ENCODE measurements at regions of chr21 and their contacts with region 1.

Region 1: DNA sequence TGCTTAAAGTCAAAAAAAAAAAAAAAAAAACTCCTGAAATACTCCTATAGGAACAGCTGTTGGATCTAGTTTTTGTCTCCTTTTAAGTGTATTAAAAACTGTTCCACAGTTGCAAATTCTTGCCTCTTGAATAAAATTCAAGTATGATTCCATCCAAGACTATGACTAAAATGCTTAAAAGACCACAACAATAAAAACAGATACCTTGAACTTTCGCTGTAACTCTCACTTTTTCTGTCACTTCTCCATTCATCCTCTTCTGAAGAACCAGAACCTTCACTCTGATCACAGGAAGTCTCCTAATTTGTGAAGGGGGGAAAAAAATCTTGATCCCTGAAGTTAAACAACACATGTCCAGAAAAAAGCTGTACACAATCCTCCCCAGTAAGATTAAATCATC is 55.0 kb upstream of the PSMG1 start:
- DNase-seq: no peak
- H3K4me3 Mint-ChIP-seq: no peak overlapping the region
- H3K27ac Mint-ChIP-seq: no peak overlapping the region
- H3K4me1 Mint-ChIP-seq: peaks cover 5% of the 10 kb centered on the region
- H3K27me3 Mint-ChIP-seq: no peaks in the 10 kb centered on the region

Region 2: DNA sequence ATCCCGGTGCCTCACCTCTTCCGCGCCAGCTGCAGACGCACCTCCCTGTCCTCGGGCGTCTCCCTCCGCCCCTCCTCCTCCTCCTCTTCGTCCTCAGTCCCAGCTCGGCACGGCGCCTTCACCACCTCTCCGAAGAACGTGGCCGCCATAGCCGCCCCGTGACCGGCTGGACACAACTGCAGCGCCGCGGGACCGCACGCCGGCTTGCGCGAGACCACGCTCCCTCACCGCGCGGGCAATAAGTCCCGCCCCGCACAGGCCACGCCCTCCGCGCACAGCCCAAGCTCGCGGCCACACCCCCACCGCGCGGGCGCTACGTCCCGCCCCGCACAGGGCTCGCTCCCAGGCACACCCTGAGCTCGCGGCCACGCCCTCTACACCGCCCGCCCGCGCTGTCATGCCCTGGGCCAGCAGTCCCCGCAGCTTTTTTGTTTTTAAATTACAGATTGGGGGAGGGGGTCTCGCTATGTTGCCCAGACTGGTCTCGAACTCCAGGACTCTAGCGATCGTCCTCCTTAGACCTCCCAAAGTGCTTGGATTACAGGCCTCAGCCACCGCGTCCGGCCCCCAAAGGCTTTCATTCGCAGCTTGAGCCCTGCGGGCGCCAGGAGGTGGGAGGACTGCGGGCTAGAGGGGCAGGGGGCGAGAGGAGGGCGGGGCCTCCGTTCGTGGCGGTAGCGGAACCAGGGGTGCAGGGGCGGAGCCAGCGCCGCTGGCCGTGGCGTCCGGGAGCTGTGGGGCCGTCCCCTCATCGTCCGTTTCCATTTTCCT is 54.9 kb before region 1 on chr21 and contains the start of gene PSMG1:
- intact Hi-C with region 1: no loop called
- DNase-seq: peak; percentile 91
- H3K4me3 Mint-ChIP-seq: peak within 1 kb of the TSS; percentile 98
- H3K27ac Mint-ChIP-seq: peak within 1 kb of the TSS; percentile 98
- H3K4me1 Mint-ChIP-seq: peaks cover 55% of the 10 kb centered on the region
- H3K27me3 Mint-ChIP-seq: no peaks in the 10 kb centered on the region
- total RNA-seq, gene PSMG1: 102 and 103 TPM in 2 replicates

Region 3: DNA sequence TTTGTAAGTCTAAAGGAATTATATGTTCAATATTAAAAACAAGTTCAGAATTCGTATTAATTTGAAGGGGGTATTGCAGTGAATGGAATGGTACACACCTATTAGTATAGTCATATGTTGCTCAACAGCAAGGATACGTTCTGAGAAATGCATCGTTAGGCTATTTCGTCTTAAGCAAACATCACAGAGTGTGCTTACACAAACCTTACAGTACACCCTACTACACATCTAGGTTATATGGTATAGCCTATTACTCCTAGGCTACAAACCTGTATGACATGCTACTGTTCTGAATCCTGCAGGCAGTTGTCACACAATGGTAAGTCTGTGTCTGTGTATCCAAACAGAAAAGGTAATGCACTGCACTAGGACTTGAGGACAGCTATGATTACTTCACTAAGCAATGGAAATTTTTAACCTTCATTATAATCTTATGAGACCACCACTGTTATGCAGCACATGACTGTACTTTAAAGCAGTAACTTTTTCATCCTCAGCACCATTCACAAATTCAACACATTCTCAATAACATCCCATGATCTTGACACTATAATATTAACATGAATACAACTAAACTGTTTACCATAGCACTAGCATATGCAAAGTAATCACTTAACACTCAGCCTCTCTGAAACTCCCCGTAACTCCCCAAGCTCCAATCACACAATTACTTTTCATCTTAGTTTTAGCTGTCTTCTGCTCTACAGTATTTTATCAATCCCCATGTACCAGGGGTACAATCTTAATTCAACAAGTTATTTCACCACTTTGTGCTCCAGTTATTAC is 40.6 kb before region 1 on chr21:
- intact Hi-C with region 1: loop called (anchors 5 kb)
- DNase-seq: no peak
- H3K4me3 Mint-ChIP-seq: no peak overlapping the region
- H3K27ac Mint-ChIP-seq: no peak overlapping the region
- H3K4me1 Mint-ChIP-seq: peaks cover 28% of the 10 kb centered on the region
- H3K27me3 Mint-ChIP-seq: no peaks in the 10 kb centered on the region

Region 4: GRCh38 chr21:39281207-39281606 is 42.9 kb after region 1 on chr21:
- intact Hi-C with region 1: loop called (anchors 5 kb)
- DNase-seq: no peak
- H3K4me3 Mint-ChIP-seq: no peak overlapping the region
- H3K27ac Mint-ChIP-seq: peak overlapping the region; percentile 42
- H3K4me1 Mint-ChIP-seq: peaks cover 12% of the 10 kb centered on the region
- H3K27me3 Mint-ChIP-seq: no peaks in the 10 kb centered on the region